Left cardiac atrium (tissue), 4 donors: ENCODE measurements at regions of chr1 and their contacts with region 1.

Region 1: DNA sequence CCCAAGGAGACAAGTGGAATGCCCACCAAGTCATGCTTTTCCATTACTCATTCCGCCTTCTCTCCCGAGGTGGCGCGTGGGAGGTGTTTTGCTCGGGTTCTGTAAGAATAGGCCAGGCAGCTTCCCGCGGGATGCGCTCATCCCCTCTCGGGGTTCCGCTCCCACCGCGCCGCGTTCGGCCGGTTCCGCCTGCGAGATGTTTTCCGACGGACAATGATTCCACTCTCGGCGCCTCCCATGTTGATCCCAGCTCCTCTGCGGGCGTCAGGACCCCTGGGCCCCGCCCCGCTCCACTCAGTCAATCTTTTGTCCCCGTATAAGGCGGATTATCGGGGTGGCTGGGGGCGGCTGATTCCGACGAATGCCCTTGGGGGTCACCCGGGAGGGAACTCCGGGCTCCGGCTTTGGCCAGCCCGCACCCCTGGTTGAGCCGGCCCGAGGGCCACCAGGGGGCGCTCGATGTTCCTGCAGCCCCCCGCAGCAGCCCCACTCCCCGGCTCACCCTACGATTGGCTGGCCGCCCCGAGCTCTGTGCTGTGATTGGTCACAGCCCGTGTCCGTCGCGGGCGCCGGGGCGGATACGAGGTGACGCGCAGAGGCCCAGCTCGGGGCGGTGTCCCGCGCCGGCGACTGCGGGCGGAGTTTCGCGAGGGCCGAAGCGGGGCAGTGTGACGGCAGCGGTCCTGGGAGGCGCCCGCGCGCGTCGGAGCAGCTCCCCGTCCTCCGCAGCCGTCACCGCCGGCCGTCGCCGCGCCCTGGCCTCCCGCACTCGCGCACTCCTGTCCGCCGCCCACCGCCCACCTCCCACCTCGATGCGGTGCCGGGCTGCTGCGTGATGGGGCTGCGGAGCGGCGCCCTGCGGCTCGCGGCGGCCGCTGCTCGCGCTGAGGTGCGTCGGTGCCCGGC is at the start of gene KIF1B:
- DNase-seq: peak; percentile 99
- ATAC-seq: peak; percentile 97 to 98
- total RNA-seq, gene KIF1B: 46.1 to 54.2 TPM

Region 2: GRCh38 chr1:10286244-10286643 is 76.1 kb after region 1 on chr1:
- intact Hi-C with region 1: loop called in 1 of 2 experiments (anchors 5 kb)
- DNase-seq: no peak
- ATAC-seq: peak; percentile 89 to 90

Region 3: DNA sequence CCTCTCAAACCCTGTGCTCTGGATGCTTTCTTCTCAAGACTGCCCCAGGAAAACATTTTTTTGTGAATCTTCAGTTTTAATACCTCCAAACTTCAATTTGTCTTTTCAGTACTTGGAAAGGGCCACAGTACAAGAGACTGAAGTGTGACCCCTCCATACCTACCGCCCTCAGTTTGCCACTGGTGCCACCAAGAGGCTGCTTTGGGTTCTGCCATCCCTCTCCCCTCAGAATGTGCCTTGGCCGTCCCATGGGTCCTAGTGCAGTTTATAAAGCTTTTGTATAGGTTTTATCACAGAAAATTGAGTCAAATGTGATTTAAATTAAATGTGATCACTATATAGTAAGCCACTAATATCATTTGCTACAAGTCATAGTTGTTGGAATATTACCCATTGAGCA is 127.9 kb after region 1 on chr1:
- intact Hi-C with region 1: loop called (anchors 10 kb)
- DNase-seq: peak; percentile 39
- ATAC-seq: peak; percentile 85 to 93